ENCODE measurements at regions of chr5 and their contacts with region 1.

Region 1: GRCh38 chr5:149683964-149684363 is 46.1 kb upstream of the PPARGC1B start:
- DNase-seq: no peak
- ATAC-seq: no peak
- H3K4me3 ChIP-seq: no peak overlapping the region
- H3K4me3 Mint-ChIP-seq: no peak overlapping the region
- H3K27ac ChIP-seq: no peak overlapping the region
- H3K27ac Mint-ChIP-seq: no peak overlapping the region
- H3K4me1 ChIP-seq: no peaks in the 10 kb centered on the region
- H3K4me1 Mint-ChIP-seq: no peaks in the 10 kb centered on the region
- H3K27me3 ChIP-seq: no peaks in the 10 kb centered on the region
- H3K27me3 Mint-ChIP-seq: peaks cover 34% of the 10 kb centered on the region
- CTCF ChIP-seq: no peak

Region 2: DNA sequence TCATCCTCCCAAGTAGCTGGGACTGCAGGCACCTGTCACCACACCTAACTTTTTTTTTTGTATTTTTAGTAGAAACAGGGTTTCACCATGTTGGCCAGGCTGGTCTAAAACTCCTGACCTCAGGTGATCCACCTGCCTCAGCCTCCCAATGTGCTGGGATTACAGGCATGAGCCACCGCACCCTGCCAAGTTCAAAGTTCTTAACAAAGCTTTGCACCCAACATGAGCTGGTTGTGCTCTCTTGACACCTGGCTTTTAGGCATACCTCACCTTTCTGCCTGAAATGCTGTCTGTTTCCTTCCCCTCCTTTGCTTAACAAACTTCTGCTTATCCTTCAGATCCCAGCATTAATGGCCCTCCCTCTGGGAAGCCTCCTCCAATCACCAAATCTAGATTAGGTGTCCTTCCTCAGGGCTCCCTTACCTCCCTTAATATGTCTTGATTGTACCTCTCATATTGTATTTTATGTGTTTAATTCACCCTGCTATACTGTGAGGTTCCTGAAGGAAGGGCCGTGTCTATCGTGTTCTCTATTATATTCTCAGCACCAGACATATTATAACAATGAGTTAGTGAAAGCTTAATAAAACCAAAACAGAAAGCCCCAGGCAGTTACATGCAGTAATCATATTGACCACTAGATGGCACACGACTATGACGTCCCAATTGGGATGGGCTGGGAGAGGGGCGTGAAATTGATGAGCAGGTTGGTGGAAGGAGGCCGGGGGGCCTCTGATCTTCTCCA is 16.7 kb before region 1 on chr5:
- CTCF ChIA-PET with region 1: interaction called, 10 read pairs
- POLR2A ChIA-PET with region 1: no interaction called
- intact Hi-C with region 1: no loop called
- DNase-seq: peak in 3 of 9 experiments; percentile 5 to 48 (median 33)
- ATAC-seq: no peak
- H3K4me3 ChIP-seq: no peak overlapping the region
- H3K4me3 Mint-ChIP-seq: no peak overlapping the region
- H3K27ac ChIP-seq: no peak overlapping the region
- H3K27ac Mint-ChIP-seq: no peak overlapping the region
- H3K4me1 ChIP-seq: no peaks in the 10 kb centered on the region
- H3K4me1 Mint-ChIP-seq: no peaks in the 10 kb centered on the region
- H3K27me3 ChIP-seq: no peaks in the 10 kb centered on the region
- H3K27me3 Mint-ChIP-seq: peaks cover 9% of the 10 kb centered on the region
- CTCF ChIP-seq: peak; percentile 61